Caco-2 (cell line): ENCODE measurements at regions of chr1 and their contacts with region 1.

Region 1: GRCh38 chr1:2174348-2175054 is 20.1 kb downstream of the FAAP20 start:
- DNase-seq: peak; percentile 57 to 66
- H3K4me3 ChIP-seq: no peak overlapping the region
- H3K4me3 Mint-ChIP-seq: no peak overlapping the region
- H3K27ac Mint-ChIP-seq: no peak overlapping the region
- H3K4me1 ChIP-seq: no peaks in the 10 kb centered on the region
- H3K4me1 Mint-ChIP-seq: no peaks in the 10 kb centered on the region
- H3K27me3 ChIP-seq: no peaks in the 10 kb centered on the region
- H3K27me3 Mint-ChIP-seq: no peaks in the 10 kb centered on the region
- CTCF ChIP-seq: peak; percentile 79 to 81

Region 2: DNA sequence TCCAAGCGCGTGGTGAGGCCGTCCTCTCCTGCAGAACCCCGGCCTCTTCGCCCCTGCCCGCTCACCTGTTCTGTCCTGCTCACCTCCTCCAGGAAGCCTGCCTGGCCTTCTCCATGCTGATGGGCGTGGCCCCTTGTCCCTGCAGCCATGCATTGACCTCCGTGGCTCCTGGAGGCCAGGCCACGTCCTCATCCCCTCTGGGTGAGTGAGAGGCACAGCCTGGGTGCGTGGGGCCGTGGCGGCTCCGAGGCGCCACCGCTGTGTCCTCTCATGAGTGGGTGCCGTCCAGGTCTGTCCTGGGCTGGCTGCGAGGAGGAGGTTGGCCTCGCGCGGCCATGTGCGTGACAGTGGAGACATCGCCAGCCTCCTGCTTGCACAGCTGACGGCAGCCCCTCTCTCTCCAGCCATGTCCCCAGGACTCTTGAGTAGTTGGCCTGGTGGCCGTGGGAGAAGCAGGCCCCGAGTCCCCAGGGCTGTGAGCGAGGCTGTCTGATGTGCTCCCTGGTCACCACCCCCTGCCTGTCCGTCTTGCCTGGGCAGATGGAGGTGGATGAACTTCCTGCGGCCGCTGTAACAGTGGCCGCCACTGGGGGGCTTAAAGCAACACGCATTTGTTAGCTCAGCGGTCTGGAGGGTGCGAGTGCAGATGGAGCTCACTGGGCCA is 66.2 kb before region 1 on chr1:
- CTCF ChIA-PET with region 1: interaction called, 11 read pairs
- POLR2A ChIA-PET with region 1: no interaction called
- intact Hi-C with region 1: loop called (anchors 2 kb)
- DNase-seq: peak; percentile 52 to 53
- H3K4me3 ChIP-seq: no peak overlapping the region
- H3K4me3 Mint-ChIP-seq: no peak overlapping the region
- H3K27ac Mint-ChIP-seq: no peak overlapping the region
- H3K4me1 ChIP-seq: no peaks in the 10 kb centered on the region
- H3K4me1 Mint-ChIP-seq: no peaks in the 10 kb centered on the region
- H3K27me3 ChIP-seq: no peaks in the 10 kb centered on the region
- H3K27me3 Mint-ChIP-seq: no peaks in the 10 kb centered on the region
- CTCF ChIP-seq: peak; percentile 36 to 46

Region 3: DNA sequence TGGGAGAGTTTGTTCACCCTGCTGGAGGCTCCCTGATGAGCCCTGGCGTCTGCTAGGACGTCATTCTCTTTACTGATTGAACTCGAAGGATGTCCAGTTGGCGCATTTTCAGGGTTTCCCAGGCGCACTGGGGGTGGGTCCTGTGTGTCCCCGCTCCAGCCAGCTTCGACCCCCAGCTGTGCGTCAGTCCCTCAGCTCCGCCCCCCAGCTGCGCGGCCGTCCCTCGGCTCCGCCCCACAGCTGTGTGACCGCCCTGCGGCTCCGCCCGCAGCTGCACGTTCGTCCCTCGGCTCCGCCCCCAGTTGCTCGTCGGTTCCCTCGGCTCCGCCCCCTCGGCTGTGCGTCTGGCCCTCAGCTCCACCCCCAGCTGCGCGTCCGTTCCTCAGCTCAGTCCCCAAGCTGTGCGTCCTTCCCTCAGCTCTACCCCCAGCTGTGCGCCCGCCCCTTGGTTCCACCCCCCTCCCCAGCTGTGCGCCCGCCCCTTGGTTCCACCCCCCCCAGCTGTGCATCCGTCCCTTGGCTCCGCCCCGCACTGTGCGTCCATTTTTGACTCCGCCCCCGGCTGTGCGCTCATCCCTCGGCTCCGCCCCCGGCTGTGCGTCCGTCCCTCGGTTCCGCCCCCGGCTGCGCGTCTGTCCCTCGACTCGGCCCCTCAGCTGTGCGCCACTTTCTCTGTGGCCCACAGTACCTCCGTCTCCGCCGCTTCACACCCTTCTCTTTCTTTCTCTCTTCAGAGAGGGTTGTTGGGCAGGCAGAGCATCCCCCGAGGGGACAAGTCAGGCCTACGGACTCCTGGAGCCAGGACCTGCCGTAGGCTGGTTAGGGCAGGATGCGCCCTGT is 41.2 kb before region 1 on chr1:
- CTCF ChIA-PET with region 1: interaction called, 7 read pairs
- POLR2A ChIA-PET with region 1: no interaction called
- intact Hi-C with region 1: loop called (anchors 2 kb)
- DNase-seq: peak; percentile 60 to 78
- H3K4me3 ChIP-seq: no peak overlapping the region
- H3K4me3 Mint-ChIP-seq: peak overlapping the region; percentile 64
- H3K27ac Mint-ChIP-seq: peak overlapping the region; percentile 88
- H3K4me1 ChIP-seq: peaks cover 47% of the 10 kb centered on the region
- H3K4me1 Mint-ChIP-seq: peaks cover 17% of the 10 kb centered on the region
- H3K27me3 ChIP-seq: no peaks in the 10 kb centered on the region
- H3K27me3 Mint-ChIP-seq: no peaks in the 10 kb centered on the region
- CTCF ChIP-seq: no peak

Region 4: GRCh38 chr1:2425892-2426291 is 251.4 kb after region 1 on chr1:
- CTCF ChIA-PET with region 1: no interaction called
- POLR2A ChIA-PET with region 1: no interaction called
- intact Hi-C with region 1: no loop called
- DNase-seq: no peak
- H3K4me3 ChIP-seq: no peak overlapping the region
- H3K4me3 Mint-ChIP-seq: no peak overlapping the region
- H3K27ac Mint-ChIP-seq: no peak overlapping the region
- H3K4me1 ChIP-seq: no peaks in the 10 kb centered on the region
- H3K4me1 Mint-ChIP-seq: no peaks in the 10 kb centered on the region
- H3K27me3 ChIP-seq: no peaks in the 10 kb centered on the region; the same call in 1 of the 2 replicates
- H3K27me3 Mint-ChIP-seq: no peaks in the 10 kb centered on the region
- CTCF ChIP-seq: no peak